Activated naive CD4-positive, alpha-beta T cell treated with anti-CD3 and anti-CD28 coated beads for 36 hours (primary cell): ENCODE measurements at regions of chr9 and their contacts with region 1.

Region 1: GRCh38 chr9:121201738-121202533 is at the start of gene RAB14:
- DNase-seq: peak; percentile 100
- H3K4me3 Mint-ChIP-seq: peak within 1 kb of the TSS; percentile 91
- H3K27ac Mint-ChIP-seq: peak within 1 kb of the TSS; percentile 95
- H3K4me1 Mint-ChIP-seq: peaks cover 42% of the 10 kb centered on the region
- H3K27me3 Mint-ChIP-seq: no peaks in the 10 kb centered on the region
- total RNA-seq, gene RAB14: 61.1 to 64.2 TPM

Region 2: GRCh38 chr9:120443489-120443888 is 758.4 kb before region 1 on chr9:
- CTCF ChIA-PET with region 1: no interaction called
- intact Hi-C with region 1: no loop called
- DNase-seq: no peak
- H3K4me3 Mint-ChIP-seq: no peak overlapping the region
- H3K27ac Mint-ChIP-seq: no peak overlapping the region
- H3K4me1 Mint-ChIP-seq: peaks cover 7% of the 10 kb centered on the region
- H3K27me3 Mint-ChIP-seq: no peaks in the 10 kb centered on the region

Region 3: DNA sequence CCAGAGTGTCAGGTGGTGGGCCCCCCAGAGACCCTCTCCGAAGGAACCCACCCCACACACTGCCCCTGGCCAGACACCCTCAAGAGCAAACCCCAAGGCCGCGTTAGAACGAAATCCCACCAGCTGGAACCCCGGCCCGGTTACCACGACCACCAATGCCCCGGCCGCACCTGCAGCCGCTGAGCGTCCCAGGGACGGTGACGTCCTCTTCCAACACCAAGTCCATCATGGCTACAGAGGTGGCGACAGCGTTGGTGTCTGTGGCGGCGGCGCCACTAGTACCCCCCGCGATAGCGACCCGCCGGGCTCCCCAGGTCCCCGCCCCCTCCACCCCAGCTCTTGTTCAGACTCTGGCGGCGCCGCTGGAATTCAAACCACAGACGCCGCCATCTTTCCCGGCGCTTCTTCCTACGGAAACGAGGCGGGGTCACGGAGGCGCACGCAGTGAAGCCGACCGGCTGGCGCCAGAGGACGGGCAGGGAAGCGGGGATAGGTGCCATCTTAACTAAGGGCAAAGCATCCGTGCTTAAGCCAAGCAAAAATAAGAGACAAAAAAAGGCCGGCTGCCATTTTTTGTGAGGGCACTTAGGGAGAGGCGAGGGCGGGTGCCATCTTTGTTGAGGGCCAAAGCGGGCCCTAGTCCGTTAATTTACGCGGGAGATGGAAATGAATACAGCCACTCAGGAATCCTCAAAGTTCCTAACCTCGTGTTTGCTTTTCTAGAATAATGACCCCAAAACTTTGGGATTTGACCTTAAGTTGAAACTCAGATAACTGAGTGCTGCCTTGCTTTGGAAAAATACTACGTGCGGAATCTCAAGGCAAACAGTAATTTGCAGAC is 622.0 kb before region 1 on chr9 and contains the start of gene CDK5RAP2:
- CTCF ChIA-PET with region 1: no interaction called
- intact Hi-C with region 1: loop called (anchors 1 kb)
- DNase-seq: peak; percentile 96
- H3K4me3 Mint-ChIP-seq: peak within 1 kb of the TSS; percentile 97
- H3K27ac Mint-ChIP-seq: peak within 1 kb of the TSS; percentile 92
- H3K4me1 Mint-ChIP-seq: peaks cover 47% of the 10 kb centered on the region
- H3K27me3 Mint-ChIP-seq: no peaks in the 10 kb centered on the region
- total RNA-seq, gene CDK5RAP2: 92.7 to 99.7 TPM

Region 4: DNA sequence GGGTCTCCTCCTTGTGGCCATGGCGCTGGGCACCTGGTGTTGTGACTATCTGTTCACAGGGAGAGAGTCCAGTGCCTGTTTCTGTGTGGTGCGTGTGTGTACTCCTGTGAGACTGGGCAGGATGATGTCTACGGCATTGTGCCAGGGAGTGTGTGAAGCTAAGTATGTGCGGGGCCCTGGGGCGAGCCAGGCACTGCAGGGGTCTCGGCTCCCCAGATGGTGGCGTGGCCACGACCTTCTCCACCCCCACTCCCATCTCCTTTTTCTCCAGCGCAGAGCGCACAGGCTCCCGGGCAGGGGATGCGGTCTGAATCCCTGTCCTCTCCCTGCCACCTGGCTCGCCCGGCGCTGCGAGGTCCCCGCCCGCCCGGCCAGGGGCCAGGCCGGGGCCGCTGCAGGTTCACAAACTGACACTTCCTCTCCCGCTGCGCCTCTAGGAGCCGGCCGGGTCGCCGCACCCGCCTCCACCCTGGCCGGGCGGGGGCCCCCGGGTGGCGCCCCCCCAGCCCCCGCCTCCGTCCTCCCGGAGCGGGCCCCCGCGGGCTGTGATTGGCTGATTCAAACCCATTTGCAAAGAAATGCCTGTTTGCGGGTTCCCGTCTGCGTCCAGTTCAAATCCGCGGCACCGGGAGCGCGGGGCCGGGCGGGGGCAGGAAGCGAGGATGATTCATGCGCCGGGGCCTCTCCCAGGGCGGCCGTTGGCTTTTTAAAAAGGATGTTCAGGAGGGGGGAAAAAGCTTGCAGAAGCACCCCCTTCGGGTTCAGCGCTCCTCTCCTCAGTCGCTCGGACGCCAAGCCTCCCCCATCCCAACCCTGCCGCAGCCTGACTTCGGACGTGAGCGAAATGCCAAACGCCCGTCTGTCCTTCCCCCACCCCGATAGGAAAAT is 325.7 kb before region 1 on chr9:
- CTCF ChIA-PET with region 1: no interaction called
- intact Hi-C with region 1: loop called (anchors 2 kb)
- DNase-seq: peak; percentile 98
- H3K4me3 Mint-ChIP-seq: peak overlapping the region; percentile 85
- H3K27ac Mint-ChIP-seq: peak overlapping the region; percentile 98
- H3K4me1 Mint-ChIP-seq: peaks cover 75% of the 10 kb centered on the region
- H3K27me3 Mint-ChIP-seq: no peaks in the 10 kb centered on the region

Region 5: GRCh38 chr9:120998111-120998510 is 203.8 kb before region 1 on chr9:
- CTCF ChIA-PET with region 1: no interaction called
- intact Hi-C with region 1: no loop called
- DNase-seq: no peak
- H3K4me3 Mint-ChIP-seq: no peak overlapping the region
- H3K27ac Mint-ChIP-seq: no peak overlapping the region
- H3K4me1 Mint-ChIP-seq: no peaks in the 10 kb centered on the region
- H3K27me3 Mint-ChIP-seq: no peaks in the 10 kb centered on the region

Region 6: DNA sequence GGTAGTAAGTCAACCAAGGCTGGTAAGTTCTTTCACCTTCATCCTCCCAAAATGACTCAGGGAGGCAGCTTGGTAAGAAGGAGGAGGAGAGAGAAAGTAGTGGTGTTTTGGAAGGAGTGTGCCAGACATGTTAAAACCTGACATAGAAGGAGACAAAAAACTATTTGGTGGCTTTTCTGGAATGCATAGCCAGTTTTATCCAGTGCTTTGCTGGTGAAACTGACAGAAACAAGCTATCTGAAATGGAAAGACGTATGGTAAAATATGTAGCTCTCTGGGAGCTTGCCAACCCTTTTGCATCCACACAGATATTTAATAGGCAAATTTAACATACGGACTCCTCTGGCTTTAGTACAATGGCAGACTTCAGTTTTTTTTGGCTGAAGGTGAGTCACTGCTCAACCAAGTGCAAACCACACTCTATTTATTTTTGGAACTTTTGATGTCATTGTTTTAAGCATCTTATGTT is 45.6 kb before region 1 on chr9:
- CTCF ChIA-PET with region 1: interaction called, 4 read pairs
- intact Hi-C with region 1: loop called (anchors 2 kb)
- DNase-seq: peak; percentile 26
- H3K4me3 Mint-ChIP-seq: no peak overlapping the region
- H3K27ac Mint-ChIP-seq: peak overlapping the region; percentile 87
- H3K4me1 Mint-ChIP-seq: peaks cover 31% of the 10 kb centered on the region
- H3K27me3 Mint-ChIP-seq: no peaks in the 10 kb centered on the region

Region 7: DNA sequence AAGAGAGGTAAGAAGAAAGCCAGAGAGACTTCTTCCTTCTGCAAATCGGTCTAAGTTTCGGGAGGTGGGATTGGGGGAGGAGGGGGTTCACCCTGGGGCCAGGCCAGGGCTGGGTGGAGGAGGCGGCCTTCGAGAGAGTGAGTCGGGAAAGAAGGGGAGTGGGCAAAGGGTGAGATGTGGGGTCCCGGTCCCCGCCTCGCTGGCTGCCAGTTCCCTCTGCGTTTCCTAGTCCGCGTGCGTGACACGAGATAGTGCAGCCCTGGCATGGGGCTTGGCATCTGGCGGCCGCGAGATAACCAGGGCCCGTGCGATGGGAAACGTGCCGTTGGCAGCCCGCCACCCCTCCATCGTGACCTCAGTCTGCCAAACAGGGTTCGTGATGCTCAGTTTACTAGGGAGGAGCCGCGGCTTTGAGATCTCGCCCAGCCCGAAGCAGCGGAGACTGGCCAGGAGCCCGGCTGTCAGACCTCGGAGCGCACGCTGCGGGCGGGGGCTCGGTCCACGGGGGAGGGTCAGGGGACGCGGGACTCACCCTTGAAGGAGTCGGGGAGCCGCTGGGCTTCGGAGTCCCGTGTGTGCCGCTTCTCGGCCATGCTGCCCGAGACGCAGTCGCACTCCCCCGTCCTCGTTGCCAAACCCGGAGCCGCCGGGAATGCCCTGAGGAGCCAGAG is 167.8 kb after region 1 on chr9 and contains the start of gene STOM:
- CTCF ChIA-PET with region 1: no interaction called
- intact Hi-C with region 1: loop called (anchors 5 kb)
- DNase-seq: peak; percentile 74
- H3K4me3 Mint-ChIP-seq: peak within 1 kb of the TSS; percentile 82
- H3K27ac Mint-ChIP-seq: peak within 1 kb of the TSS; percentile 88
- H3K4me1 Mint-ChIP-seq: peaks cover 31% of the 10 kb centered on the region
- H3K27me3 Mint-ChIP-seq: no peaks in the 10 kb centered on the region
- total RNA-seq, gene STOM: 34.0 to 37.7 TPM